Heart left ventricle (tissue), 16 donors: ENCODE measurements at regions of chr7 and their contacts with region 1.

Region 1: GRCh38 chr7:114070244-114070643 is 151.4 kb upstream of the PPP1R3A start:
- DNase-seq: no peak
- ATAC-seq: no peak
- H3K4me3 ChIP-seq: no peak overlapping the region
- H3K27ac ChIP-seq: no peak overlapping the region
- H3K4me1 ChIP-seq: no peaks in the 10 kb centered on the region
- H3K27me3 ChIP-seq: no peaks in the 10 kb centered on the region
- CTCF ChIP-seq: no peak
- POLR2A ChIP-seq: no peak

Region 2: GRCh38 chr7:114130866-114131265 is 60.6 kb after region 1 on chr7:
- intact Hi-C with region 1: no loop called
- DNase-seq: no peak
- ATAC-seq: no peak
- H3K4me3 ChIP-seq: no peak overlapping the region
- H3K27ac ChIP-seq: no peak overlapping the region
- H3K4me1 ChIP-seq: no peaks in the 10 kb centered on the region
- H3K27me3 ChIP-seq: no peaks in the 10 kb centered on the region
- CTCF ChIP-seq: no peak
- POLR2A ChIP-seq: no peak

Region 3: DNA sequence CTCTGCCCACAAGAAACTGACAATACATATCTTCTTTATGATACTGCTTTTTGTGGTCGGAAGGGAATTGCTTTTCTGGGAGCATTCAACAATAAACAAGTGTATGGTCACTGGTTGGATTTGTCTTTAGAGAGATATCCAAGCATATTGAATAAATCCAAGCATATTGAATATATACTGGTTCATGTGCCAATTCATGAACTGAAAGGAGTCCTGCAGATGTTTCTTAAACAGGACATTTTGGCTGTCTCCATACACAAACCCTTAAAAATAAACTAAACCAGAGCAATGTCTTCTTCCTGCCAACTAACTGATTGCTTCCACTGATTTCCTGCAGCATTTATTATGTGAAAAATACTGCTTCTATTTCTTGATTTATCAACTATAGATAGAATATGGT is 518.3 kb after region 1 on chr7:
- intact Hi-C with region 1: no loop called
- DNase-seq: no peak
- ATAC-seq: no peak
- H3K4me3 ChIP-seq: no peak overlapping the region
- H3K27ac ChIP-seq: no peak overlapping the region
- H3K4me1 ChIP-seq: no peaks in the 10 kb centered on the region
- H3K27me3 ChIP-seq: no peaks in the 10 kb centered on the region
- CTCF ChIP-seq: no peak
- POLR2A ChIP-seq: no peak

Region 4: DNA sequence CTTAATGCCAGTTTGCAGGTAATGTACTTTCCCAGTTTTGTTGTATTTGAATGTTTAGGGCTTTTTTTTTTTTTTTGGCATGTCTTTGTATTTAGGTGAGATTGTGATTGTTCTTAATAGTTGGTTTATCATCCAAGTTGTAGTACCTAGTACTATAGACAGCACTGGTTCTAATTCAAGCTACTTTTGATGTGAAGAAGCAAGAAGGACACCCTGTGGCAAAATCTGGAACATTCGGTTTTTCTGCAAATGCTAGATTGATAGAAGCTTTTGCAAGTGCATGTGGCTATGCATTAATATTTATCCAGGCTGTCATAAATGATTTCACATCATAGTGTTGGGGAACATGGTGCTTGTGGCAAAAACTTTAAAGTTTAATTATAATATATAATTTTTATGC is 593.3 kb after region 1 on chr7:
- intact Hi-C with region 1: loop called in 1 of 10 experiments (anchors 10 kb)
- DNase-seq: no peak
- ATAC-seq: no peak
- H3K4me3 ChIP-seq: no peak overlapping the region
- H3K27ac ChIP-seq: no peak overlapping the region
- H3K4me1 ChIP-seq: peaks cover 0 to 12% (median 0%) of the 10 kb centered on the region in 12 donors
- H3K27me3 ChIP-seq: no peaks in the 10 kb centered on the region
- CTCF ChIP-seq: peak in 5 of 12 donors; percentile 18 to 38 (median 23)
- POLR2A ChIP-seq: no peak

Region 5: GRCh38 chr7:115910541-115911164 is 1840.4 kb after region 1 on chr7:
- intact Hi-C with region 1: loop called in 1 of 10 experiments (anchors 10 kb)
- DNase-seq: no peak
- ATAC-seq: no peak
- H3K4me3 ChIP-seq: no peak overlapping the region
- H3K27ac ChIP-seq: no peak overlapping the region
- H3K4me1 ChIP-seq: peaks cover 0 to 14% (median 0%) of the 10 kb centered on the region in 12 donors
- H3K27me3 ChIP-seq: peaks cover 0 to 8% (median 0%) of the 10 kb centered on the region in 9 donors
- CTCF ChIP-seq: peak; percentile 35 to 70 (median 52)
- POLR2A ChIP-seq: no peak